ENCODE measurements at regions of chr19 and their contacts with region 1.

Region 1: DNA sequence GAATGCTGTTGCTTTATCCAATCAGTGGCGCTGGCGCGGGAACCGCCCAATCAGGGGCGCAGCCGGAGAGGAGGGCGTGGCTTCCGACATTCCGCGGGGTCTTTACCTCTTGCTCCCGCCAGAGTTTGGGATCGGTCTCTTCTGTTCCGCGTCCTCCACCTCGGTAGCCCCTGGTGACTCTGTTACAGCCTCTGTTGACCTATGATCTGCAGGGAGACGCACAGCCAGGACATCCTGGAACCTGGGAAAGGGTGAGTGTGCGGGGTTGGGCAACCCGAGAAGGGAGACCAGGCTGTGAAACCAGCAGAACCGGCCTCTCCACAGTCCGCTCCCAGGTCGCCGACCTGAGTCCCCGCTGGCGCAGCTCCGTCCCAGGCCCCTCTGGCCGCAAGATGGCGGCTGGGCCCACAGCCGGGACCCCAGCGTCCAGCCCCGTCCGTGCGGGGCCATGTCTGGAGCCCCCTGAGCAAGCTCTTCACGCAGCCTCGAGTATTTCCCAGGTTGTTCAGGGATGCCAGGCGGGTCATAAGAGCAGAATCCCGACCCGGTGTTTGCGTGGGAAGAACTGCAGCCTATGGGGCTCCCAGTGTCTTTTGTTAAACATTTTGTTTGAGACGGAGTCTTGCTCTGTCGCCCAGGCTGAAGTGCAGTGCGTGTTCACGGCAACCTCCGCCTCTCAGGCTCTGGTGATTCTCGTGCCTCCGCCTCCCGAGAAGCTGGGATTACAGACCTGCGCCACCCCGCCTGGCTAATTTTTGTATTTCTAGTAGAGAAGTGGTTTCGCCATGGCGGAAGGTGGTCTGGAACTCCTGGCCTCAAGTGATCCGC is 4.4 kb upstream of the ZNF681 start:
- DNase-seq: peak; percentile 87 to 92 (median 88)
- ATAC-seq: peak; percentile 90
- H3K4me3 ChIP-seq: peak overlapping the region; percentile 17 to 89
- H3K27ac ChIP-seq: peak overlapping the region; percentile 65 to 92 (median 81)
- H3K4me1 ChIP-seq: peaks cover 16% of the 10 kb centered on the region
- H3K27me3 ChIP-seq: no peaks in the 10 kb centered on the region
- CTCF ChIP-seq: peak in 1 of 7 experiments; percentile 11
- POLR2A ChIP-seq: peak; percentile 48 to 82 (median 71)

Region 2: DNA sequence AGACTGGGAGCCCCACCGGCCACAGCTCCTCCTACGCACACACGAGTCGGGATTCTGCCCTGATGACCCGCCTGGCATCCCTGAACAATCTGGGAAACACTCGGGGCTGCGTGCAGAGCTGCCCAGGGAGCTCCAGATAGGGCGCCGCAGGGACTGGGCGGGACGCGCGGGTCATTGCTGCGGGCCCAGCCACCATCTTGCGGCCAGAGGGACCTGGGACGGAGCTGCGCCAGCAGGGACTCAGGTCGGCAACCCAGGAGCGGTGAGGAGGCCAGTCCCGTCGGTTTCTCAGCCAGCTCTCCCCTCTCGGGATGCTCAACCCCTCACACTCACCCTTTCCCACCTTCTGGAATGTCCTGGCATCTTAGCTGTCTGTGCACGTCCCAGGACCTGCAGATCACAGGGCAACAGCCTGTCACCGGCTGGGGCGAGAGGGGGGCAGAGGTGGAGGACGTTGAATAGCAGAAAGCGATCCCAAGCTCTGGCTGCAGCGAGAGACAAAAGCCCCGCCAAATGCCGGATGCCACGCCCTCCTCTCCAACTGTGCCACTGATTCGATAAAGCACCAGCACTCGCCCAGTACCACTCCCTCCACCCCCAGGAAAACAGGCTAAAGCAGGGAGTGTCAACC is 347.4 kb before region 1 on chr19:
- intact Hi-C with region 1: no loop called
- DNase-seq: peak in 3 of 4 donors; percentile 19 to 32 (median 20)
- ATAC-seq: no peak
- H3K4me3 ChIP-seq: peak overlapping the region in 1 of 2 donors; percentile 14
- H3K27ac ChIP-seq: no peak overlapping the region
- H3K4me1 ChIP-seq: peaks cover 14% of the 10 kb centered on the region
- H3K27me3 ChIP-seq: no peaks in the 10 kb centered on the region
- CTCF ChIP-seq: no peak
- POLR2A ChIP-seq: no peak

Region 3: GRCh38 chr19:23686621-23687423 is 76.3 kb before region 1 on chr19 and contains the start of gene ZNF675:
- intact Hi-C with region 1: no loop called
- DNase-seq: peak; percentile 87 to 94 (median 90)
- ATAC-seq: peak; percentile 94
- H3K4me3 ChIP-seq: peak within 1 kb of the TSS; percentile 61 to 91
- H3K27ac ChIP-seq: peak within 1 kb of the TSS; percentile 75 to 90 (median 86)
- H3K4me1 ChIP-seq: peaks cover 4% of the 10 kb centered on the region
- H3K27me3 ChIP-seq: no peaks in the 10 kb centered on the region
- CTCF ChIP-seq: peak in 2 of 7 experiments; percentile 4 to 15
- POLR2A ChIP-seq: peak in 2 of 3 donors; percentile 63 to 75
- total RNA-seq, gene ZNF675: 3.0 to 6.5 TPM

Region 4: GRCh38 chr19:23882493-23882892 is 119.4 kb after region 1 on chr19:
- intact Hi-C with region 1: no loop called
- DNase-seq: peak in 1 of 4 donors; percentile 3
- ATAC-seq: no peak
- H3K4me3 ChIP-seq: no peak overlapping the region
- H3K27ac ChIP-seq: no peak overlapping the region
- H3K4me1 ChIP-seq: no peaks in the 10 kb centered on the region
- H3K27me3 ChIP-seq: no peaks in the 10 kb centered on the region
- CTCF ChIP-seq: no peak
- POLR2A ChIP-seq: no peak

Region 5: DNA sequence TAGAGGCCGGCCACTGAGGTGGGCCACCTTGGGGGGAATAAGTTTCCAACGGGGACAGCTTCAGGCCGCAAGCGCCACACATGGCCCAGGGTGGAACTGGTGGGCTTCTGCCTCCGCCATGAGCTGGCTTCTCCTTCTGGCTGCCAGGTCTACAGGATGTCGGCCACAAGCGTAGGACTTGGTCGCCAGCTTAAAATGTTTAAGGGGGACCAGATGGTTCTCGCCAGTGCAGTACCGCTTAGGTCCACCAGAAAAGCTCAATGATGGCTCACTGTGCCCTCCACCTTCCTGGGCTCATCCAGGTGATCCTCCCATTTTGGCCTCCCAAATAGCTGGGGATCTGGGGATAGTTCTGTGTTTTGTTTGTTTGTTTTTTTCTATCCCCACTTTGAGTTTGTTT is 285.2 kb after region 1 on chr19:
- intact Hi-C with region 1: loop called (anchors 10 kb)
- DNase-seq: no peak
- ATAC-seq: no peak
- H3K4me3 ChIP-seq: no peak overlapping the region
- H3K27ac ChIP-seq: no peak overlapping the region
- H3K4me1 ChIP-seq: no peaks in the 10 kb centered on the region
- H3K27me3 ChIP-seq: no peaks in the 10 kb centered on the region
- CTCF ChIP-seq: no peak
- POLR2A ChIP-seq: no peak